Prostate gland (tissue), 2 donors: ENCODE measurements at regions of chr7 and their contacts with region 1.

Region 1: GRCh38 chr7:70156057-70156456 is 557.8 kb downstream of the AUTS2 start:
- DNase-seq: no peak
- H3K4me3 ChIP-seq: no peak overlapping the region
- H3K27ac ChIP-seq: no peak overlapping the region
- H3K4me1 ChIP-seq: peaks cover 4% of the 10 kb centered on the region
- H3K27me3 ChIP-seq: no peaks in the 10 kb centered on the region
- CTCF ChIP-seq: no peak
- POLR2A ChIP-seq: no peak

Region 2: GRCh38 chr7:70040970-70041766 is 114.9 kb before region 1 on chr7:
- intact Hi-C with region 1: loop called (anchors 5 kb)
- DNase-seq: no peak
- H3K4me3 ChIP-seq: no peak overlapping the region
- H3K27ac ChIP-seq: no peak overlapping the region
- H3K4me1 ChIP-seq: no peaks in the 10 kb centered on the region
- H3K27me3 ChIP-seq: no peaks in the 10 kb centered on the region
- CTCF ChIP-seq: peak in 3 of 4 experiments; percentile 21 to 49 (median 40)
- POLR2A ChIP-seq: no peak

Region 3: GRCh38 chr7:70104243-70104642 is 51.8 kb before region 1 on chr7:
- intact Hi-C with region 1: no loop called
- DNase-seq: no peak
- H3K4me3 ChIP-seq: no peak overlapping the region
- H3K27ac ChIP-seq: no peak overlapping the region
- H3K4me1 ChIP-seq: no peaks in the 10 kb centered on the region
- H3K27me3 ChIP-seq: no peaks in the 10 kb centered on the region
- CTCF ChIP-seq: no peak
- POLR2A ChIP-seq: no peak

Region 4: DNA sequence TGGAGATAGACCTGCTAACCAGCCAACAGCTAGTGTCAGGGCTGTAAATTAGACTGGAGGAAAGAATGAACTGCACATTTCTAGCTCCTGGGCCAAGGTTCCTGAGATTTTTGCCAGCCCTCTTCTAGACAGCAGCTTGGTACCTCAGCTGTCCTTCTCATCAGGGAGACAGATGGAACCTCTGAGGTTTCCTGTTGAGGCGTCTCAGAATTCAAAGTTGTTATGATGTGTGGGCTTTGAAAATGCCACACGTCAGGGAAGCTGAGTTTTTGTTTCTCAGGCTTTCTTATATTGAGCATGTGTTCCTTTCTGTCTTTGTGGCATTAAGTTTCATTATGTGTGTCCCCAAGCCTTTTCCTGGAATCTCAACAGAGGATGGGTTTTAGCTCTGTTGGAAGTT is 178.8 kb after region 1 on chr7:
- intact Hi-C with region 1: no loop called
- DNase-seq: no peak
- H3K4me3 ChIP-seq: no peak overlapping the region
- H3K27ac ChIP-seq: no peak overlapping the region
- H3K4me1 ChIP-seq: no peaks in the 10 kb centered on the region
- H3K27me3 ChIP-seq: no peaks in the 10 kb centered on the region
- CTCF ChIP-seq: no peak
- POLR2A ChIP-seq: no peak

Region 5: GRCh38 chr7:71106226-71106625 is 950.2 kb after region 1 on chr7:
- intact Hi-C with region 1: no loop called
- DNase-seq: no peak
- H3K4me3 ChIP-seq: no peak overlapping the region
- H3K27ac ChIP-seq: no peak overlapping the region
- H3K4me1 ChIP-seq: no peaks in the 10 kb centered on the region
- H3K27me3 ChIP-seq: no peaks in the 10 kb centered on the region
- CTCF ChIP-seq: no peak
- POLR2A ChIP-seq: no peak